Breast epithelium (tissue), 4 donors: ENCODE measurements at regions of chr4 and their contacts with region 1.

Region 1: GRCh38 chr4:59518005-59518823 is 1681.9 kb upstream of the ADGRL3 start:
- DNase-seq: no peak
- H3K4me3 ChIP-seq: no peak overlapping the region
- H3K27ac ChIP-seq: no peak overlapping the region
- H3K4me1 ChIP-seq: no peaks in the 10 kb centered on the region
- H3K27me3 ChIP-seq: no peaks in the 10 kb centered on the region
- CTCF ChIP-seq: no peak
- POLR2A ChIP-seq: no peak

Region 2: DNA sequence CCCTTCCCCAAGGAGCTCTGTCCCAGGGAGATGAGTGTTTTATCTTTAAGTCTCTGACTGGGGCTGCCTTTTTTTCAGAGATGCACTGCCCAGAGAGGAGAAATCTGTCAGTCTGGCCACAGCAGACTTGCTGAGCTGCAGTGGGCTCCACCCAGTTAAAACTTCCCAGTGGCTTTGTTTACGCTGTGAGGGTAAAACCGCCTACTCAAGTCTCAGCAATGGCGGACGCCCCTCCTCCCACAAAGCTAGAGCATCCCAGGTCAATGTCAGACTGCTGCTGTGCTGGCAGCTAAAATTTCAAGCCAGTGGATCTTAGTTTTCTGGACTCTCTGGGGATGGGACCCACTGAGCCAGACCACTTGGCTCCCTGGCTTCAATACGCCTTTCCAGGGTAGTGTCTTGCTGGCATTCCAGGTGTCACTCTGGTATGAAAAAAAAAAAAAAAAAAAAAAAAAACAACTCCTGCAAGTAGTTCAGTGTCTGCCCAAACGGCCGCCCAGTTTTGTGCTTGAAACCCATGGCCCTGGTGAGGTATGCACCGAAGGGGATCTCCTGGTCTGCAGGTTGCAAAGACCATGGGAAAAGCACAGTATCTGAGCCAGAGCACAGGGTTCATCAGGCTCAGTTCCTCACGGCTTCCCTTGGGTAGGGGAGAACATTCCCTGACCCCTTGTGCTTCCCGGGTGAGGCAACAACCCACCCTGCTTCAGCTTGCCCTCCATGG is 65.8 kb after region 1 on chr4:
- intact Hi-C with region 1: loop called (anchors 5 kb)
- DNase-seq: no peak
- H3K4me3 ChIP-seq: no peak overlapping the region
- H3K27ac ChIP-seq: no peak overlapping the region
- H3K4me1 ChIP-seq: no peaks in the 10 kb centered on the region
- H3K27me3 ChIP-seq: no peaks in the 10 kb centered on the region
- CTCF ChIP-seq: no peak
- POLR2A ChIP-seq: no peak

Region 3: DNA sequence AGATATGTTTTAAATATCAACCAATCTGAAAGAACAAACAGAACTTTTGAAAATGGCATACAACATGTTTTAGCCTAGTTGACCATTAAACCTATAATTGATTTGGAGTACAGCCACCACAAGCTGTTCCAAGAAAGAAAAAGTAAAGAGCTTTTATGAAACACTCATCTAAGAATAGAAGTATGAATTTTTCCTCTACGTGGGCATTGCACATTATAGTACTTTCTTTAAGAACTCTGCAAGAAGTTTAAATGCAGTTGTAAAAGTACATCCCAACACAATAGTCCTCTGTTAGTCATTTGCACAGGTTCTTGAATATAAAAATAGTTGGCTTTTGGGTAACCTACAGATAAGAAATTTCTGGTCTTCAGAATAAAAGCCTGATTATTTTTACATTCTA is 748.3 kb after region 1 on chr4:
- intact Hi-C with region 1: no loop called
- DNase-seq: no peak
- H3K4me3 ChIP-seq: no peak overlapping the region
- H3K27ac ChIP-seq: no peak overlapping the region
- H3K4me1 ChIP-seq: no peaks in the 10 kb centered on the region
- H3K27me3 ChIP-seq: no peaks in the 10 kb centered on the region
- CTCF ChIP-seq: no peak
- POLR2A ChIP-seq: no peak